SK-N-SH (cell line): ENCODE measurements at regions of chr6 and their contacts with region 1.

Region 1: GRCh38 chr6:170295510-170296422 is 4.9 kb upstream of the DLL1 start:
- DNase-seq: peak; percentile 78
- H3K4me3 ChIP-seq: peak overlapping the region; percentile 45 to 57
- H3K27ac ChIP-seq: no peak overlapping the region
- H3K4me1 ChIP-seq: peaks cover 0 to 22% of the 10 kb centered on the region in 2 experiments; a peak in 1 of 4 replicates
- H3K27me3 ChIP-seq: peaks cover 69% of the 10 kb centered on the region
- CTCF ChIP-seq: no peak
- EP300 ChIP-seq: no peak
- RAD21 ChIP-seq: no peak

Region 2: DNA sequence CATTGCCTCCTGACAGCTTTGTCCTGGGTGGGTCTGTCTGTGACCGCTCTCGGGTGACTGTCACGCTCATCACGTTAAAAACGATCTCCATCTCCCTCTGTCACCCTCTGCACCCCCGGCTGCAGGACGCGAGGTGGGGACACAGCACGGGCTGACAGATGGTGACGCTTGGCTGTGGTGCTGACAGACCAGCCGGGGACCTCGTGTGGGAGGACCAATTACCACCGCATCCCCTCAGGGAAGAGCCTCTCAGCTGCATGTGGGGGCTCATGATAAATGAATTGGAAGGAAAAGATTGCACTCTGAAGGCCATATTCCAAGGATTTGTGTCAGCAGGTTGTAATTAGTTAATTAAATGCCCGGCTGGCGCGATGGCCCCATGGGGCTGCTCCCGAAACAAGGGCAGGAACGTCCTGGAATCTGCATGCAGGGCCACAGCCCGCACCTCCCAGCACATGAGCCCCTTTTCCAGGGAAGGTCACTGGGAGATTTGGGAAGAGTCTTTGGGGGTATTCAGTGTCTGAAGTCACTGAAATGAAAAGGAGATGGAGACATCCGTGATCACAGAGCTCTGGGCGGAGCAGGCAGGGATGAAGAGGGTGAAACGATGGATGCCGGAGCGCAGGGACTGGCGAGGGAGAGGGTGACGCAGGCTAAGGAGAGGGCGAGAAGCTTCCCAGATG is 457.3 kb before region 1 on chr6:
- CTCF ChIA-PET with region 1: interaction called, 27 read pairs
- POLR2A ChIA-PET with region 1: no interaction called
- DNase-seq: peak; percentile 85
- H3K4me3 ChIP-seq: peak overlapping the region in 1 of 2 experiments; percentile 17; a peak in 1 of 4 replicates
- H3K27ac ChIP-seq: no peak overlapping the region
- H3K4me1 ChIP-seq: peaks cover 0 to 17% of the 10 kb centered on the region in 2 experiments; a peak in 2 of 4 replicates
- H3K27me3 ChIP-seq: no peaks in the 10 kb centered on the region; the same call in 1 of the 2 replicates
- CTCF ChIP-seq: no peak
- EP300 ChIP-seq: no peak
- RAD21 ChIP-seq: peak; percentile 60

Region 3: GRCh38 chr6:169950558-169950957 is 345.2 kb before region 1 on chr6:
- CTCF ChIA-PET with region 1: interaction called, 13 read pairs
- POLR2A ChIA-PET with region 1: no interaction called
- DNase-seq: no peak
- H3K4me3 ChIP-seq: no peak overlapping the region
- H3K27ac ChIP-seq: no peak overlapping the region
- H3K4me1 ChIP-seq: no peaks in the 10 kb centered on the region
- H3K27me3 ChIP-seq: no peaks in the 10 kb centered on the region
- CTCF ChIP-seq: no peak
- EP300 ChIP-seq: no peak
- RAD21 ChIP-seq: peak; percentile 57

Region 4: GRCh38 chr6:170312876-170313275 is 17.1 kb after region 1 on chr6:
- CTCF ChIA-PET with region 1: no interaction called
- POLR2A ChIA-PET with region 1: no interaction called
- DNase-seq: no peak
- H3K4me3 ChIP-seq: no peak overlapping the region
- H3K27ac ChIP-seq: no peak overlapping the region; a peak in 1 of 4 replicates
- H3K4me1 ChIP-seq: peaks cover 11 to 27% of the 10 kb centered on the region in 2 experiments; a peak in 3 of 4 replicates
- H3K27me3 ChIP-seq: no peaks in the 10 kb centered on the region
- CTCF ChIP-seq: no peak
- EP300 ChIP-seq: no peak
- RAD21 ChIP-seq: no peak